Common myeloid progenitor, CD34-positive (primary cell): ENCODE measurements at regions of chr3 and their contacts with region 1.

Region 1: GRCh38 chr3:128487813-128488635 is 5.0 kb downstream of the GATA2 start:
- DNase-seq: peak; percentile 66 to 79 (median 70)
- H3K4me3 ChIP-seq: peak overlapping the region; percentile 70 to 98 (median 87)
- H3K27ac ChIP-seq: peak overlapping the region; percentile 81 to 93
- H3K4me1 ChIP-seq: peaks cover 3 to 95% (median 71%) of the 10 kb centered on the region in 4 experiments
- H3K27me3 ChIP-seq: peaks cover 0 to 11% (median 0%) of the 10 kb centered on the region in 5 experiments

Region 2: DNA sequence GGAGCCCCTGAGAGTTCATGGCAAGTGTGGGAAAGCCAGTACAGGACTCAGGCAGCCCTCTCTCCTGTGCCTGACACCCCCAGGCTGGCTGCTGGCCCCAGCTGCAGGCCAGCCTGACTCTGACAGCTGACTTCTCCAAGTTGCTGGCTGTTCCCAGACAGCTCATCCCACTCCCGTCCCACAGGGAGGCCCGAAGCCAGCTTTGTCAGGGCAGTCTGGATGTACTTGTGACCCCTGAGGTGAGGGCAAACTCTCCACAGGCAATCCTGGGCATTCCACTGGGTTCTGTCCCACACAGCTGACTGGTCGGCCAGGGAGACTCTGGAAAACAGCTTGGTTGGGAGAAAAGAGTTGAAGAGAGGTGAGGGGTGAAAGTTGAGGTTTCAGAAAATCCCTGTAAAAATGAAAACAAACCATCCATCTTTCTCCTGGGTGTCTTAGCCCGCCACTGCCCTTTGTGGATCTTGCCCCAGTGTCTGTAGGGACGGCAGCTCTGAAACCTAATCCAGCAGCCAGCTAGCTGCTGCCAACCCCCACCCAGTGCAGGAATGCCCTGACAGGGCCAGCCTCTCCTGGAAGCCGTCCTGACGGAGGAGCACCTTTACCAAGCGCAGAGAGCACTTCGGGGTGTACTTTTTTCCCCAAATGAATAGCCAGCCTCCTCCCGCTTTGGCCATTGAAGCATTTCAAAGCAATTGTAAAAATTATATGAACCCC is 109.2 kb before region 1 on chr3:
- CTCF ChIA-PET with region 1: no interaction called
- POLR2A ChIA-PET with region 1: no interaction called
- DNase-seq: no peak
- H3K4me3 ChIP-seq: no peak overlapping the region
- H3K27ac ChIP-seq: no peak overlapping the region
- H3K4me1 ChIP-seq: peaks cover 0 to 7% (median 5%) of the 10 kb centered on the region in 4 experiments
- H3K27me3 ChIP-seq: no peaks in the 10 kb centered on the region

Region 3: DNA sequence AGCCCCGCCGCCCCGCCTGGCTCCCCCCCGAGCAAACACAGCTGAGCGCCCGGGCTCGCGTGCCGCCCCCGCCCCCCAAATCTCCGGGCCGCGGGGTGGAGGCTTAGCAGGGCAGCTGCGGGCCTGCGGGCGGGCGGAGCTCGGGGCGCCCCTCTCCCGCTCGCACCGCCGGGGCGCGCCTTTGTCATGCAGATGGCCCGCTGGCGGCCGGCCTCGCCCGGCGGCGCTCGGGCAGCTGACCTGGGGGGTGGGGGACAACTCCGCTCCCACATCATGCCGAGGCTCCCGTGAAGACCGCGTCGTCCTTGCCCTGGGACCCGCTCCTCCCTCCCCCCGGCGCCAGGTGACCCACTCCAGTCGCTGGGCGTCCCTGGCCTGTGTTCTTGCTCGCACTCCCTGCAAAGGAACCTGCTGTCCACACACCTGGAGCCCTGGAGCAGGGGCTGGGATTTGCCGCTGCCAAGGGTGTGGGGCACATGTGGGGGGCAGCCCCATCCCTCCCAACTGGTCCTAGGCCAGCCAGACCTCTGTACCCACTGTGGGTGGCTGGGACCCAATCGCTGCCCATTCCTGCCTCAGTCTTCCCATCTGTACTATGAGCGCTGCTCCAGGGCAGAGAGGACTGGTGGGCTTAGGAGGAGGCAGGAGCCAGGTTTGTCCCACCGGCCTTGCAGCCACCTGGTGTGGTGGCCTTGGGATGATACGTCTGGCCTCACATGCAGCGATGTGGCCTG is 54.9 kb before region 1 on chr3:
- CTCF ChIA-PET with region 1: interaction called, 33 read pairs
- POLR2A ChIA-PET with region 1: interaction called, 4 read pairs
- DNase-seq: peak in 2 of 3 donors; percentile 33 to 54
- H3K4me3 ChIP-seq: peak overlapping the region in 6 of 7 experiments; percentile 2 to 63 (median 43)
- H3K27ac ChIP-seq: no peak overlapping the region
- H3K4me1 ChIP-seq: peaks cover 0 to 13% (median 9%) of the 10 kb centered on the region in 4 experiments
- H3K27me3 ChIP-seq: peaks cover 0 to 32% (median 11%) of the 10 kb centered on the region in 5 experiments

Region 4: GRCh38 chr3:128539376-128539775 is 51.4 kb after region 1 on chr3:
- CTCF ChIA-PET with region 1: no interaction called
- POLR2A ChIA-PET with region 1: no interaction called
- DNase-seq: no peak
- H3K4me3 ChIP-seq: no peak overlapping the region
- H3K27ac ChIP-seq: no peak overlapping the region
- H3K4me1 ChIP-seq: peaks cover 0 to 1% (median under 1%) of the 10 kb centered on the region in 4 experiments
- H3K27me3 ChIP-seq: no peaks in the 10 kb centered on the region

Region 5: GRCh38 chr3:128624501-128625300 is 136.7 kb after region 1 on chr3:
- CTCF ChIA-PET with region 1: no interaction called
- POLR2A ChIA-PET with region 1: no interaction called
- DNase-seq: no peak
- H3K4me3 ChIP-seq: no peak overlapping the region
- H3K27ac ChIP-seq: no peak overlapping the region
- H3K4me1 ChIP-seq: peaks cover 0 to 10% (median 5%) of the 10 kb centered on the region in 4 experiments
- H3K27me3 ChIP-seq: no peaks in the 10 kb centered on the region